PC-9 (cell line): ENCODE measurements at regions of chr12 and their contacts with region 1.

Region 1: GRCh38 chr12:46785382-46785781 is 40.4 kb downstream of the SLC38A4 start:
- DNase-seq: no peak
- H3K4me3 ChIP-seq: no peak overlapping the region
- H3K27ac ChIP-seq: no peak overlapping the region
- H3K4me1 ChIP-seq: no peaks in the 10 kb centered on the region
- H3K27me3 ChIP-seq: no peaks in the 10 kb centered on the region
- CTCF ChIP-seq: no peak

Region 2: GRCh38 chr12:46959482-46959881 is 174.1 kb after region 1 on chr12:
- CTCF ChIA-PET with region 1: no interaction called
- POLR2A ChIA-PET with region 1: no interaction called
- intact Hi-C with region 1: no loop called
- DNase-seq: peak; percentile 65 to 97
- H3K4me3 ChIP-seq: no peak overlapping the region
- H3K27ac ChIP-seq: peak overlapping the region; percentile 62
- H3K4me1 ChIP-seq: peaks cover 40% of the 10 kb centered on the region
- H3K27me3 ChIP-seq: no peaks in the 10 kb centered on the region
- CTCF ChIP-seq: no peak

Region 3: GRCh38 chr12:47156167-47156736 is 370.9 kb after region 1 on chr12:
- CTCF ChIA-PET with region 1: no interaction called
- POLR2A ChIA-PET with region 1: no interaction called
- intact Hi-C with region 1: no loop called
- DNase-seq: no peak
- H3K4me3 ChIP-seq: no peak overlapping the region
- H3K27ac ChIP-seq: no peak overlapping the region
- H3K4me1 ChIP-seq: peaks cover 12% of the 10 kb centered on the region
- H3K27me3 ChIP-seq: no peaks in the 10 kb centered on the region
- CTCF ChIP-seq: no peak

Region 4: DNA sequence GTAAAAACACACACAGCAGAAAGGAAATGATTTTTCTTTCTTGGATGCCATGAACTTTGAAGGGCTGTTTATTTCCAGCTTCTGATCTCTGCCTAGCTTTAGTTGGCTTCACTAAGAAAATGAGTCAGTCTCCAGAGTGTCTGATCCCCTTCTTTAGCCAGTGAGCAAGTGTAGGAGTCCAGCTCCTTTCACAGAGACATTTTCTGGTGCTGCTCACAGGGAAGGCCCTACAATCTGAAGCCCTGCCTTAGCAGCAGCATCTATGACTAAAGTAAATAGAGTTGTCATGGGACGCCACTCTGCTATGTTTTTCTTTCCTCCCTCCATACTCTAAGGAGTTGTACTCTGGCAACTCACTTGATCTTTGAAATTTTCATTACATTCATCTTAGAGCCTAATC is 816.9 kb after region 1 on chr12:
- CTCF ChIA-PET with region 1: interaction called, 19 read pairs
- POLR2A ChIA-PET with region 1: no interaction called
- intact Hi-C with region 1: no loop called
- DNase-seq: no peak
- H3K4me3 ChIP-seq: no peak overlapping the region
- H3K27ac ChIP-seq: no peak overlapping the region
- H3K4me1 ChIP-seq: no peaks in the 10 kb centered on the region
- H3K27me3 ChIP-seq: no peaks in the 10 kb centered on the region
- CTCF ChIP-seq: no peak